Activated naive CD4-positive, alpha-beta T cell treated with anti-CD3 and anti-CD28 coated beads for 36 hours (primary cell): ENCODE measurements at regions of chr12 and their contacts with region 1.

Region 1: DNA sequence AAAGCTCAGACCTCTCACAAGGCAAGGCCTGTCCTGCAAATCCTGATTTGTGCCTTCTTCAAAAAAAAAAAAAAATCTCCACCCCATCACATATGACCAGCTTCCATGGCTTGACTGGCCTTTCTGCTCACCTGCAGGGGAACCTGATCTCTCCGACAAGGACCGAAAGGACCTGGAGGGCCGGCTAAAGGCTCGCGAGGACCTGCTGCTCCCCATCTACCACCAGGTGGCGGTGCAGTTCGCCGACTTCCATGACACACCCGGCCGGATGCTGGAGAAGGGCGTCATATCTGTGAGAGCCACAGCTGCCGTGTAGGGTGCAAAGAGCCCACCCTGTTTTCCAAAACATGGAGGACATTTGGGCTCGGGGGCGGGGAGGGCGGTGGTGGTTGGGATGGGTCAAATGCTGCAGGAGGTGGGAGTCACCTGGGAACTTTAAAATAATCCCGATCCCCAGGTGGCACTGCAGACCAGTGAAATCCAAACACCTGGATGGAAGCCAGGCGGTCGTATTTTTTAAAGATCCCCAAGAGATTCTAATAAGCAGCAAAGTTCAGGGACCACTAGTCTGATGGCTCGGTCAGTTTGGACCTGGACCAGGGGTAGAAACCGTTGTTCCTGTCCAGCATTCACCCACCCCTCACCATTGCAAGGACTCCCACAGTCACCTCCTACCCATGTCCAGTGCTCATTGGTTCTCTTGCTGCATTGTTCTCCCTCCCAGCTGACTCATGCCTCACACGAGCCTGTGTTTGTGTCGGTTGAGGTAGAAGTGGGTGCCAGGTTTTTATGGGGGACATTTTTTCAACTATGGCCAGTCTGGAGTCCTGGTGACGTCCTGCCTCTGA is 44.8 kb downstream of the FOXN4 start:
- DNase-seq: peak; percentile 69
- H3K4me3 Mint-ChIP-seq: no peak overlapping the region
- H3K27ac Mint-ChIP-seq: no peak overlapping the region
- H3K4me1 Mint-ChIP-seq: no peaks in the 10 kb centered on the region
- H3K27me3 Mint-ChIP-seq: no peaks in the 10 kb centered on the region

Region 2: DNA sequence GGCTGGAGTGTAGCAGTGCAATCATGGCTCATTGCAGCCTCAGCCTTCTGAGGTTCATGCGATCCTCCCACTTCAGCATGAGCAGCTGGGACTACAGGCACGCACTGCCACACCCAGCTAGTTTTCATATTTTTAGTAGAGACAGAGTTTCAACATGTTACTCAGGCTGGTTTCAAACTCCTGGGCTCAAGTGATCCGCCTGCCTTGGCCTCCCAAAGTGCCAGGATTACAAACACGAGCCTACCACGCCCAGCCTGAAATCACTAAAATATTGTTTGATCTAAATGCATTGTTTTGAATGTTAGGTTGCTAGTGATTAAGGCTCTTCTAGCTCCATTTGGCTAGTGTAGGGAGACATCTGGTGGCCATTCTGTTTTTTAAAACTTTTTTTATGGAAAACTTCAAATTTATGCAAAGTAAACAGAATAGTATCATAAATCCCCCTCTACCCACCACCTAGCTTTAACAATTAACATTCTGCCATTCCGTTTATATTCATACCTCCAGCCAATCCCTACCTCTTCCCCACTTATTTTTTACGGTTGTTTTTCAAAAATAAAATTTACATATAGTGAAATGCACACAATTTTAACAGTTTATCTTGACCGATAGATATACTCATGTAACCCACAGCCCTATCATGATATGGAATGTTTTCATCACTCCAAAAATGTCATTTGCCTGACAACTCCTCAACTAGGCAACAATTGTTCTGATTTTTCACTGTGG is 121.2 kb after region 1 on chr12:
- CTCF ChIA-PET with region 1: interaction called, 5 read pairs
- intact Hi-C with region 1: loop called (anchors 1 kb)
- DNase-seq: peak; percentile 9
- H3K4me3 Mint-ChIP-seq: no peak overlapping the region
- H3K27ac Mint-ChIP-seq: no peak overlapping the region
- H3K4me1 Mint-ChIP-seq: no peaks in the 10 kb centered on the region
- H3K27me3 Mint-ChIP-seq: peaks cover 8% of the 10 kb centered on the region